Thyroid gland (tissue), 4 donors: ENCODE measurements at regions of chr12 and their contacts with region 1.

Region 1: GRCh38 chr12:76074701-76075336 is 9.7 kb downstream of the NAP1L1 start:
- DNase-seq: no peak
- H3K4me3 ChIP-seq: no peak overlapping the region
- H3K27ac ChIP-seq: no peak overlapping the region
- H3K4me1 ChIP-seq: no peaks in the 10 kb centered on the region
- H3K27me3 ChIP-seq: no peaks in the 10 kb centered on the region
- CTCF ChIP-seq: no peak
- POLR2A ChIP-seq: no peak

Region 2: GRCh38 chr12:76031537-76032073 is 43.2 kb before region 1 on chr12 and contains the start of gene PHLDA1:
- intact Hi-C with region 1: no loop called
- DNase-seq: peak; percentile 95 to 97
- H3K4me3 ChIP-seq: peak within 1 kb of the TSS; percentile 86 to 90 (median 89)
- H3K27ac ChIP-seq: peak within 1 kb of the TSS; percentile 98 to 99 (median 99)
- H3K4me1 ChIP-seq: peaks cover 21 to 33% of the 10 kb centered on the region in 2 donors
- H3K27me3 ChIP-seq: no peaks in the 10 kb centered on the region
- CTCF ChIP-seq: peak in 5 of 6 experiments; percentile 41 to 67 (median 60)
- POLR2A ChIP-seq: peak; percentile 94 to 99
- total RNA-seq, gene PHLDA1: 45.2 to 73.1 (median 57.5) TPM

Region 3: GRCh38 chr12:76348079-76348901 is 273.5 kb after region 1 on chr12 and contains the start of gene BBS10:
- intact Hi-C with region 1: loop called (anchors 10 kb)
- DNase-seq: peak; percentile 86 to 91
- H3K4me3 ChIP-seq: peak within 1 kb of the TSS; percentile 27 to 92 (median 79)
- H3K27ac ChIP-seq: peak within 1 kb of the TSS; percentile 68 to 90 (median 84)
- H3K4me1 ChIP-seq: peaks cover 13 to 20% of the 10 kb centered on the region in 2 donors
- H3K27me3 ChIP-seq: no peaks in the 10 kb centered on the region
- CTCF ChIP-seq: peak in 5 of 6 experiments; percentile 19 to 34 (median 29)
- POLR2A ChIP-seq: peak in 1 of 2 donors; percentile 63
- total RNA-seq, gene BBS10: 11.4 to 17.6 (median 13.5) TPM